Activated CD4-positive, alpha-beta T cell treated with anti-CD3 and anti-CD28 coated beads for 36 hours (primary cell): ENCODE measurements at regions of chr19 and their contacts with region 1.

Region 1: DNA sequence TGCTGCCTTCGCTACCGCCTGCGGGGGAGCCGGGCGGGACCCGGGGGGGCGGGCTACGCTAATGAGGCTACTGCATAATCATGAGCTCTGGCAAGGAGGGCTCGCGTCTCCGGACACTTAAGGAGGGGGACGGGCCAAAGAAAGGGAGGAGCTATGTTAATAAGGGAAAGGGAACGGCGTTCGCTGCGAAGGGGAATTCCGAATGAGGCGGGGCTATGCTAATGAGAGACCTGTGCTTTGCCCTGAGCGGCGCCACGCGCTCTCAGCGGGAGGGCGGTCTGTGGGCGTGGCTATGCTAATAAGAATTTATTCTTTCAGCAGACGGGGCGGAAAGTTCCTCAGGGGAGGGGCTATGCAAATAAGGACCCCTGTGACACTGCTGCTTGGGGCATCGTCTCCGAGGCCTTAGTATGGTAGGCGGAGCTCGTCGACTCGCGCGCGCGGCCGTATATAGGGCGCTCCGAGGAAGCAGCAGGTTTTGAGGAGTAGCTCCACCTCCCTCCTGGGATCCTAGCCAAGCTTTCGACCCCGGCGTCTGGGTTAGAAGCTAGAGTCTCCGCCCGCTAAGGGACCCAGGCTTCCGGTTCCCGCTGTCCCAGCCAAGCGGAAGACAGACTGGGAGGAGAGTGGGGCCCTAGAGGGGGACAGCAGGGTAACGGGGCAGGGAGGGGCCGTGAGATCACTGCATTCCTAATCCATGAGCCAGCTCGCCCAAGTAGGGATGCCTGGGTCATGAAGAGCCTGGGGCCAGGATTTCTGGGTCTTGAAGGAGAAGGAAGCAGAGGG is at the start of gene RRAS:
- DNase-seq: peak; percentile 100
- ATAC-seq: peak; percentile 76
- H3K4me3 Mint-ChIP-seq: peak within 1 kb of the TSS; percentile 100
- H3K27ac Mint-ChIP-seq: peak within 1 kb of the TSS; percentile 100
- H3K4me1 Mint-ChIP-seq: peaks cover 48% of the 10 kb centered on the region
- H3K27me3 Mint-ChIP-seq: no peaks in the 10 kb centered on the region
- total RNA-seq, gene RRAS: 9.7 to 11.7 TPM

Region 2: GRCh38 chr19:48720613-48721296 is 919.6 kb before region 1 on chr19:
- CTCF ChIA-PET with region 1: no interaction called
- POLR2A ChIA-PET with region 1: no interaction called
- intact Hi-C with region 1: loop called in 1 of 2 experiments (anchors 5 kb)
- DNase-seq: peak; percentile 97
- ATAC-seq: peak; percentile 96
- H3K4me3 Mint-ChIP-seq: peak overlapping the region; percentile 80
- H3K27ac Mint-ChIP-seq: peak overlapping the region; percentile 97
- H3K4me1 Mint-ChIP-seq: peaks cover 14% of the 10 kb centered on the region
- H3K27me3 Mint-ChIP-seq: no peaks in the 10 kb centered on the region

Region 3: DNA sequence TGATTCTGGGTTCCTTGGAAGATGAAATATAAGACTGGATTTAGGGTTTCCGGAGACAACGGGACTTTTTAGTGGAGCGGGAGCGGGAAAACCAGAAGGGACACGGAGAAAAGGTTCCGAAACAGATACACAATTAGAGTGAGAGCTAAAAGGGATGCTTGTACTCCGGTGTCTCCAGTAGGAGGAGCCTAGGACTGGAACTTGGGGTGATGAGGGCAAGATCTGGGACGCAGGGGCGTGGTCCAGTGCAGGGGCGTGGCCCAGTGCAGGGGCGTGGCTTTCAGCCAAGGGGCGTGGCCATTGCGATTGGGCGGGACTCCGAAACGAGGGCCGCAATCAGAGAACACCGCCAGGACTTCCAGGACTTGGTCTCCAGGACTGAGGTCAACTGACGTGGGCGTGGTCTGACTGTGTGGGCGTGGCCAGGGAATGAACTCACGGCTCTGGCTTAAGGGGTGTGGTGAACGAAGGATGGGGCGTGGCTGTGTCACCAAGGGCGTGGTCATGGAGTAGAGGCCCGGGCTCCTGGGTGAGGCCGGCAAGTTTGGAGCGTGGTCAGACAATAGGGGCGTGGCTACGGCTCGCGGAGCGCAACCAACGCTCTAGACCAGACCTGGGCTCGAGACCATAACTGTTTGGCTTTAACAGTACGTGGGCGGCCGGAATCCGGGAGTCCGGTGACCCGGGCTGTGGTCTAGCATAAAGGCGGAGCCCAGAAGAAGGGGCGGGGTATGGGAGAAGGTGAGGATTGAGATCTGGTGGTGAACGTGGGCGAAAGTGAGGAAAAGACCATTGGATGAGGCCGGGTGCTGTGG is 276.8 kb before region 1 on chr19 and contains the start of gene DKKL1:
- CTCF ChIA-PET with region 1: no interaction called
- POLR2A ChIA-PET with region 1: no interaction called
- intact Hi-C with region 1: no loop called
- DNase-seq: peak; percentile 92
- ATAC-seq: peak; percentile 88
- H3K4me3 Mint-ChIP-seq: no peak within 1 kb of the TSS
- H3K27ac Mint-ChIP-seq: no peak within 1 kb of the TSS
- H3K4me1 Mint-ChIP-seq: peaks cover 11% of the 10 kb centered on the region
- H3K27me3 Mint-ChIP-seq: peaks cover 23% of the 10 kb centered on the region
- total RNA-seq, gene DKKL1: not detected

Region 4: GRCh38 chr19:49451430-49452181 is 188.7 kb before region 1 on chr19 and contains the start of gene PIH1D1:
- CTCF ChIA-PET with region 1: no interaction called
- POLR2A ChIA-PET with region 1: interaction called, 3 read pairs
- intact Hi-C with region 1: loop called in 1 of 2 experiments (anchors 1 kb)
- DNase-seq: peak; percentile 98
- ATAC-seq: peak; percentile 71
- H3K4me3 Mint-ChIP-seq: peak within 1 kb of the TSS; percentile 100
- H3K27ac Mint-ChIP-seq: peak within 1 kb of the TSS; percentile 100
- H3K4me1 Mint-ChIP-seq: peaks cover 50% of the 10 kb centered on the region
- H3K27me3 Mint-ChIP-seq: no peaks in the 10 kb centered on the region
- total RNA-seq, gene PIH1D1: 117 to 138 TPM

Region 5: DNA sequence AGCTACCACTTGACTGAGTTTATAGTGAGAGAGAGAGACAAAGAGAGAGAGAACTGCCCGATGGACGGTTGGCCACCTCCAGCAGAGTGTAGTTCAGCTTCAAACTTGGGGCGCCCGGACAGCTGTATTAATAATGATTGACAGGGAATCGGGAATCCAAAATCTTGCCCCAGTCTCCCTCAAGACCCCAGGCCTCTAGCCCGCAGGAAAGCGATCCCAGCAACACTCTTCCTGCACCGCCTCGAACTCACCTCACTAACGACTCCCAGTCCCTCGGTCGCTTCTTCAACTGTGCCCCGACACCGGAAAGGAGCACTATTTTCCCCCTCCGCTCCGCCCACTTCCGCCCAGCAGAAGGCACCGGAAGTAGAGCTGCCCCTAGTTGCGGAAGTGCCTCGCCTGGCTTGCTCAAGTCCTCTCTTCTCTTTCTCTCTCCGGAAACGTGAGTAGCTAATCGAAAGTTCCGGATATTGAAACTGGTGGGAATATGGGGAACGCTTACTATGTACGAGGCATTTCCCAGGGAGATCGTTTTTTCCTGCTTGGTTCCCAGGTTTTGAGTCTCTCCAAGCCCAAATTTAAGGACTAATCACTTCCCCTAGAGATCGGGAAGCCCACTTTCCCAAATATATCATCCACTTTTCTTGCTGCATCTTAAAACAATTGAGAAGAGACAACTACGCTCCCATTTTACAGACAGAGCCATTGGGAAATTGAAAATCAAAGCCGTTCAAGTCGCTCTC is 59.9 kb before region 1 on chr19 and contains the start of gene NOSIP:
- CTCF ChIA-PET with region 1: interaction called, 5 read pairs
- POLR2A ChIA-PET with region 1: interaction called, 6 read pairs
- intact Hi-C with region 1: loop called (anchors 1 to 2 kb)
- DNase-seq: peak; percentile 98
- ATAC-seq: peak; percentile 97
- H3K4me3 Mint-ChIP-seq: peak within 1 kb of the TSS; percentile 92
- H3K27ac Mint-ChIP-seq: peak within 1 kb of the TSS; percentile 89
- H3K4me1 Mint-ChIP-seq: peaks cover 34% of the 10 kb centered on the region
- H3K27me3 Mint-ChIP-seq: no peaks in the 10 kb centered on the region
- total RNA-seq, gene NOSIP: 71.4 to 73.1 TPM

Region 6: DNA sequence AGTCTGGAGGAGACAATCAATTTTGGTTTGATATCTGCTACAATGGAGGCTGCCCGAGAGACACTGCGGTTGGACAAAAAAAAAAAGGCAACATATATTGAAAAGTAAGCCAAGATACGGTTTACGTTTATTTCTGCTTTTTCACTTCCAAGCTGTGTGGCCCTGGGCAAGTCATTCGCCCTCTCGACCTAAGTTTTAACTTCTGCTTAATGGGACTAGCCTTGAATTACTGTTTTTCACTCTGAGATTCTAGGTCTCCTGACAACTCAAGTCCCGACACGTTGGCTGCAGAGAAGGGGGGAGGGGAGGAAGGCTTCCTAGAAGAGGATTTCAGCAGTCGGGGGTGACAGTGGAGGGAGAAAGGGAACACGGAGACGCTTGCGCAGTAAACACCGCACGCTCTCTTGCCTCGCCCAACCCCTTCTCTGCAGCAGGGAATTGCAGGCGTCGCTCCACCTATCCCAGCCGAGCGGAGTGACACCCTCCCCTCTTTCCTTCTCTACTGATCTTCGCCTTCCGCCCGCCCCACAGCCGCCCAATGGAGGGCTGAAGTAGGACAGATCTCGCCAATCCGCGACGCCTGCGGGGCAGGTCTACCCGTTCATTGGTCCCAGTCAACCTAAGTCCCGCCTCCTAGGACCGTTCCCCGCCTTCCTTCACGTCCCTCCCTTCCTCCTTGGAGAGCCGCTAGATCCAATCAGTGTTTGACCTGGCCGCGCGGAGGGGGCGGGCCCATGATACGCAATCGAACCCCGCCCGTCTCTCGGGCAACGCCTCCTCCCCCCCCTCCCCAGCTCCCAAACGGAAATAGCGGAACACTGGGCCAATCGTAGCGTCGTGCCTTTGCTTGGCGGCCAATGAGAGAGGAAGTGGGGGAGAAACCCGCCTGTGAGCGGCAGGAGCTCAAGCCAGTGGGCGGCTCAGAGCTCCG is 126.0 kb after region 1 on chr19:
- CTCF ChIA-PET with region 1: no interaction called
- POLR2A ChIA-PET with region 1: no interaction called
- intact Hi-C with region 1: loop called in 1 of 2 experiments (anchors 1 kb)
- DNase-seq: peak; percentile 99
- ATAC-seq: peak; percentile 93
- H3K4me3 Mint-ChIP-seq: peak overlapping the region; percentile 94
- H3K27ac Mint-ChIP-seq: peak overlapping the region; percentile 93
- H3K4me1 Mint-ChIP-seq: peaks cover 36% of the 10 kb centered on the region
- H3K27me3 Mint-ChIP-seq: no peaks in the 10 kb centered on the region

Region 7: GRCh38 chr19:49861541-49862375 is 221.5 kb after region 1 on chr19:
- CTCF ChIA-PET with region 1: no interaction called
- POLR2A ChIA-PET with region 1: no interaction called
- intact Hi-C with region 1: no loop called
- DNase-seq: no peak
- ATAC-seq: no peak
- H3K4me3 Mint-ChIP-seq: no peak overlapping the region
- H3K27ac Mint-ChIP-seq: no peak overlapping the region
- H3K4me1 Mint-ChIP-seq: peaks cover 23% of the 10 kb centered on the region
- H3K27me3 Mint-ChIP-seq: no peaks in the 10 kb centered on the region

Region 8: GRCh38 chr19:49877020-49877878 is 236.9 kb after region 1 on chr19 and contains the starts of genes AKT1S1 and TBC1D17:
- CTCF ChIA-PET with region 1: no interaction called
- POLR2A ChIA-PET with region 1: interaction called, 7 read pairs
- intact Hi-C with region 1: loop called (anchors 1 kb)
- DNase-seq: peak; percentile 99
- ATAC-seq: peak; percentile 75
- H3K4me3 Mint-ChIP-seq: no peak within 1 kb of the TSS
- H3K27ac Mint-ChIP-seq: no peak within 1 kb of the TSS
- H3K4me1 Mint-ChIP-seq: peaks cover 25% of the 10 kb centered on the region
- H3K27me3 Mint-ChIP-seq: no peaks in the 10 kb centered on the region
- total RNA-seq, gene AKT1S1: 16.1 to 20.3 TPM
- total RNA-seq, gene TBC1D17: 29.1 to 29.6 TPM

Region 9: GRCh38 chr19:50383852-50384684 is 743.8 kb after region 1 on chr19 and contains the start of gene POLD1:
- CTCF ChIA-PET with region 1: no interaction called
- POLR2A ChIA-PET with region 1: no interaction called
- intact Hi-C with region 1: loop called in 1 of 2 experiments (anchors 2 kb)
- DNase-seq: peak; percentile 100
- ATAC-seq: peak; percentile 92
- H3K4me3 Mint-ChIP-seq: peak within 1 kb of the TSS; percentile 99
- H3K27ac Mint-ChIP-seq: peak within 1 kb of the TSS; percentile 93
- H3K4me1 Mint-ChIP-seq: peaks cover 27% of the 10 kb centered on the region
- H3K27me3 Mint-ChIP-seq: no peaks in the 10 kb centered on the region
- total RNA-seq, gene POLD1: 220 to 227 TPM